ENCODE measurements at regions of chr13 and their contacts with region 1.

Region 1: DNA sequence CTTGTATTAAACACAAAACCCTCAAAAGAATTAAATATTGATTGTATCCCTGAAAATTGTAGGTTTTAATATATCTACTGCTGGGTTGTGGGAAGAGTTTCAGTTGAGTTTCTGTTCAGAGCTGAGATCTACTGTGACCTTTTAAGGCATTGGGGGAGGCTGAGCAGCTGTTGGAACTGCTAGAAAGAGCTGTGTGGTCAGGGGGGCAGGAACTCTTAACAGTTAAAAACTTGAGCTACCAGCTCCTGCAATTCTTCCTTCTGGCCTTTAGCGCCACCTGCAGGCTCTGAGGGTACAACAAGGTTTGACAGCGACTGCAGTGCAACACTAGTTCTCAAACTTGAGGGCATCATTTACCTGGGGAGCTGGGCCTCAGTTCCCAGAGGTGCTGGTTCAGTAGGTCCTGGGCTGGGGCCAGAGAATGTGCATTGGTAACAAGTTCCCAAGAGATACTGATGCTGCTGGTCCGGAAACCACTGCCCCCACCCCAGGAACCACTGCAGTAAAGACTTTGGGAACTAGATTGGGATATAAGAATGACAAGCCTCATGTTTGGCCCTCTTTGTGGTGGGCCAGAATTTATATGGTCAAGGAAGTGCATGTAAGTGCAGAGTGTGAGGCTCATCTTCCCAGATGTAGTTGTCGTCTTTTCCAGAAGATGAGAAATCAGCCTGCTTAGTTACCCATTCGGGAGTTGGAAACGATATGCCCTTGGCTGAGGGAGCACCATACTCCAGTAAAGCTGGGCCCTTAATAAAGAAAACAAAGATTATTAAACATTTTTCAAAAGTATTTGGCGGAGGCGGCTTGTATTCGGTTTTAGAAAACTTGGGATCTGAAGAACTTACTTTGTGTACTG is 2.6 kb downstream of the RNASEH2B start:
- DNase-seq: peak; percentile 90
- H3K4me3 Mint-ChIP-seq: peak overlapping the region; percentile 30
- H3K27ac Mint-ChIP-seq: no peak overlapping the region
- H3K4me1 Mint-ChIP-seq: peaks cover 16% of the 10 kb centered on the region
- H3K27me3 Mint-ChIP-seq: no peaks in the 10 kb centered on the region
- CTCF ChIP-seq: peak; percentile 90

Region 2: GRCh38 chr13:49669735-49670309 is 1242.3 kb before region 1 on chr13:
- CTCF ChIA-PET with region 1: no interaction called
- POLR2A ChIA-PET with region 1: no interaction called
- intact Hi-C with region 1: loop called (anchors 5 kb)
- DNase-seq: peak; percentile 73
- H3K4me3 Mint-ChIP-seq: no peak overlapping the region
- H3K27ac Mint-ChIP-seq: no peak overlapping the region
- H3K4me1 Mint-ChIP-seq: peaks cover 30% of the 10 kb centered on the region
- H3K27me3 Mint-ChIP-seq: no peaks in the 10 kb centered on the region
- CTCF ChIP-seq: peak; percentile 73

Region 3: DNA sequence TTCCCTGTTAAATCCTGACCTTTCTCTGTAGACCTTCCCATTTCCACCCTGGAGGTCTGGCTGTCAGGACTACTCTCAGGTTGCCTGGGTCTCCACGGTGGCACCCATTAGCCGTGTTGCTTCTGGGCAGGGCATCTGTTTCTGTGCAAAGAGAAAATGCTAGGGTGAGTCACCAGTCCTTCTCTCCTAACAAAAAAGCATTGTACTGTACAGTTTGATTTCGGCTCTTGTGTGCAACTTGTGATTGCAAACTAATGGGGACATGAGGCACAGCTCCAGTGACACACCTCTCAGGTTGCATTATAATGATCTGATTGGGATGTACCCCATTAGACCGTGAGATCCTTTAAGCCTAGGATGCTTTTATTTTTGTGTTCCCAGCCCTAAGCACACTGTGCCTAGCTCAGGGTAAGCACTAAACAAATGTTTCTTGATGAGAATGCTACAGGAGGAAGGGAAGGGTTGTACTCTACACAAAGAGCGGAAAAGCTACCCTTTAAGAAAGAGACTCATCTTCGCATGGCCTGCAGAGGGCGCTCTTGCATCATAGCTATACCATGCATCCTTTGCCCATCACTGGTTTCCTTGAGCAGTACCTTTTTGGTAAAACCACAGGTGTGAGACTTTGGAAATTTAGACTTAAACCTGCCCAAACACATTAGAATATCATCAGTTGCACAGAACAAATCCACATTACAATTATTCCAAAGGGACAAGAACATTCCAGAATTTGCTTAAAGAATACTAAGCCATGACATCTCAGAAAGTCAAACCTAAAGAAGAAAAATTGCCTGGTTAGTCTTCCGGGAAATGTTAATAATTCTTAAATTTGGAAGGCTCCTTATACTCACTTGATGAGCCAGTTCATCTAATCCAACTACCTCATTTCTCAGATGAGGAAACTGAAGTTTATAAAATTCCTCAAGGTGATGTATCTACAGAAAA is 935.6 kb before region 1 on chr13:
- CTCF ChIA-PET with region 1: interaction called, 21 read pairs
- POLR2A ChIA-PET with region 1: no interaction called
- intact Hi-C with region 1: loop called (anchors 2 kb)
- DNase-seq: peak; percentile 85
- H3K4me3 Mint-ChIP-seq: no peak overlapping the region
- H3K27ac Mint-ChIP-seq: peak overlapping the region; percentile 21
- H3K4me1 Mint-ChIP-seq: peaks cover 11% of the 10 kb centered on the region
- H3K27me3 Mint-ChIP-seq: no peaks in the 10 kb centered on the region
- CTCF ChIP-seq: peak; percentile 88

Region 4: DNA sequence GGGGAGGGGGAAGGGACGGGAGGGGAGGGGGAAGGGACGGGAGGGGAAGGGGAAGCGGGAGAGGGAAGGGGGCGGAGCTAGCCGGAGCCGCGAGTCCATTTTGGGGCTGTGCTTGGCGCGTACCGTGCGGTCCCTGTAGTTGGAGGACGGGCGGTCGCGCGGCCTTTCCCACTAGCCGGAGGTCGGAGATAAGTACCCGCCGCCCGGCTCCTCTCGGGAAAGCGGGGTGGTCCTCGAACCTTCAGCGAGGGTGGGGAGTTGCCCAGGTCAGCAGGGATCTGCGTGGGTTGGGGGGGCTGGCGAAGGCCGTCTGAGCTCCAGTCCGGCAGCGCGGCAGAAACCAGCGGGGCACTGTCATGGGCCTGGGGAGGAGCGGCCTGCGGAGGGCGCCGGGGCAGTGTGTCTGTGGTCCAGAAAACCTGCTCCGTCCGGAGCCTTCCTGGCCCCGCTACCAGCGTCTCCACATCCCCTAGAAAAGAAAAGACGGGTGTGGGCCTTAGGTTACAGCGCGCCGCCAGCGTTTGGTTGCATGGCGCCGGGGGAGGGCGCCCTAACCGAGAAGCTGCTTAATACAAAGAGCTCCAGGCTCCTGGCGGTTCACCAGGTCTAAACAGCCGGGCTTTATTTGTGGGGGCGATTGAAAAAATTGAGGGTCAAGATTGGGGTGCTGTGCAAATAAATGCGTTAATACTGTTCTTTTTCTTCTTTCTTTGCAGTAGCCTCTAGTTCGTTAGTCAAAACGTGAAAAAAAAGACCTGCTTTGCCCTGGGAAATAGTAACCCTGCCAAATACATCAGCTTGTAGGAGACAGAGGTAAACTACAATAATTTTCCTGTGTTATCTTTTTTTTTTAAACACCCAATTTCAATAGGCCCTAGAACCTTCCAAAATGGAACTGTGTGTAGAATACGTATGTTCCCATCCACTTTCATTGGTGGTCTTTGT is 914.9 kb before region 1 on chr13 and contains the start of gene TRIM13:
- CTCF ChIA-PET with region 1: interaction called, 20 read pairs
- POLR2A ChIA-PET with region 1: interaction called, 30 read pairs
- intact Hi-C with region 1: loop called (anchors 5 kb)
- DNase-seq: peak; percentile 91
- H3K4me3 Mint-ChIP-seq: peak within 1 kb of the TSS; percentile 89
- H3K27ac Mint-ChIP-seq: peak within 1 kb of the TSS; percentile 80
- H3K4me1 Mint-ChIP-seq: peaks cover 16% of the 10 kb centered on the region
- H3K27me3 Mint-ChIP-seq: no peaks in the 10 kb centered on the region
- CTCF ChIP-seq: peak; percentile 79
- total RNA-seq, gene TRIM13: 17.5 and 19.0 TPM in 2 replicates

Region 5: GRCh38 chr13:50923272-50923671 is 11.1 kb after region 1 on chr13:
- CTCF ChIA-PET with region 1: interaction called, 22 read pairs
- POLR2A ChIA-PET with region 1: interaction called, 8 read pairs
- intact Hi-C with region 1: no loop called
- DNase-seq: peak; percentile 6
- H3K4me3 Mint-ChIP-seq: no peak overlapping the region
- H3K27ac Mint-ChIP-seq: no peak overlapping the region
- H3K4me1 Mint-ChIP-seq: no peaks in the 10 kb centered on the region
- H3K27me3 Mint-ChIP-seq: no peaks in the 10 kb centered on the region
- CTCF ChIP-seq: no peak

Measured in MCF 10A (cell line).